ENCODE measurements at regions of chr4 and their contacts with region 1.

Region 1: DNA sequence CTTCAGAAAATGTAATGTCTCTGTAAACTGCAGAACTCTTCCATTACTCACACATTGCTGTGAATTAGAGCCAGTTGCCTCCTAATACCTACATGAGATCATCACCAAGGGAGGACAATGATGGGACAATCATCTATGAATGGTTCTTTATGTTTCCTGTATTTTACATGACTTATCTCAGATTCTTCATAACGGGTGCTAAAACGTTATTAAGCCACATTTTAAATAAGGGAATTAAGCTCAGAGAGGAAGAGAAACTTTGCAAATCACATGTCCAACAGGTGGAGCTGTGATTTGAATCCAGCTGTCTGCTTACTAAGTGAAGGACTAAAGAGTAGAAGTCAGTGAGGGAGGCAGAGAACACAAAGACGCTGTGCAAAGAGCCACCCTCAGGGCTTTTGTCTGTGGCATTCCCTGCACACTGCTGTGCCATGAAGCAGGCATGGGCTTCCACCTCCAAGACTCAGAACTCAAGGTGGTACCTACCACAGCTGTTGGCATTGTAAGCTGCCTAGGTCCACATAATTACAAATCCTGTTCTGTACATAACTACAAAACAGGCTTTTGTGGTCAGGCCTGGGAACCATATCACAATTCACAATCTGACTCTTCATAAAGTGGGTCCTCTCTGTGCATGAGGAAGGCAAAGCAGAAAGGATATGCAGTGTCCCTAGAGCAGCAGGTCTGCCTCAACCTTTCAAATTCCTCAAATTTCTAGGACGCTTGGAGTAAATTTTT is 12.8 kb downstream of the TBC1D9 start:
- DNase-seq: peak; percentile 58
- ATAC-seq: peak; percentile 81
- H3K4me3 ChIP-seq: peak overlapping the region; percentile 13; the same call in 1 of the 2 replicates
- H3K27ac ChIP-seq: peak overlapping the region; percentile 83
- H3K4me1 ChIP-seq: peaks cover 25% of the 10 kb centered on the region
- H3K27me3 ChIP-seq: no peaks in the 10 kb centered on the region
- CTCF ChIP-seq: peak in 2 of 3 experiments; percentile 34 to 44; a peak in 3 of 6 replicates
- EP300 ChIP-seq: peak in 1 of 2 experiments; percentile 73; a peak in 2 of 4 replicates
- POLR2A ChIP-seq: no peak
- RAD21 ChIP-seq: peak; percentile 52

Region 2: GRCh38 chr4:140078366-140078765 is 665.0 kb before region 1 on chr4:
- CTCF ChIA-PET with region 1: no interaction called
- POLR2A ChIA-PET with region 1: no interaction called
- RAD21 ChIA-PET with region 1: no interaction called
- SMC1A ChIA-PET with region 1: no interaction called
- in situ Hi-C with region 1: no loop called
- intact Hi-C with region 1: no loop called
- DNase-seq: no peak
- ATAC-seq: no peak
- H3K4me3 ChIP-seq: no peak overlapping the region
- H3K27ac ChIP-seq: no peak overlapping the region
- H3K4me1 ChIP-seq: no peaks in the 10 kb centered on the region
- H3K27me3 ChIP-seq: peaks cover 0 to 2% of the 10 kb centered on the region in 2 experiments; a peak in 2 of 4 replicates
- CTCF ChIP-seq: no peak
- EP300 ChIP-seq: no peak
- POLR2A ChIP-seq: no peak
- RAD21 ChIP-seq: no peak

Region 3: DNA sequence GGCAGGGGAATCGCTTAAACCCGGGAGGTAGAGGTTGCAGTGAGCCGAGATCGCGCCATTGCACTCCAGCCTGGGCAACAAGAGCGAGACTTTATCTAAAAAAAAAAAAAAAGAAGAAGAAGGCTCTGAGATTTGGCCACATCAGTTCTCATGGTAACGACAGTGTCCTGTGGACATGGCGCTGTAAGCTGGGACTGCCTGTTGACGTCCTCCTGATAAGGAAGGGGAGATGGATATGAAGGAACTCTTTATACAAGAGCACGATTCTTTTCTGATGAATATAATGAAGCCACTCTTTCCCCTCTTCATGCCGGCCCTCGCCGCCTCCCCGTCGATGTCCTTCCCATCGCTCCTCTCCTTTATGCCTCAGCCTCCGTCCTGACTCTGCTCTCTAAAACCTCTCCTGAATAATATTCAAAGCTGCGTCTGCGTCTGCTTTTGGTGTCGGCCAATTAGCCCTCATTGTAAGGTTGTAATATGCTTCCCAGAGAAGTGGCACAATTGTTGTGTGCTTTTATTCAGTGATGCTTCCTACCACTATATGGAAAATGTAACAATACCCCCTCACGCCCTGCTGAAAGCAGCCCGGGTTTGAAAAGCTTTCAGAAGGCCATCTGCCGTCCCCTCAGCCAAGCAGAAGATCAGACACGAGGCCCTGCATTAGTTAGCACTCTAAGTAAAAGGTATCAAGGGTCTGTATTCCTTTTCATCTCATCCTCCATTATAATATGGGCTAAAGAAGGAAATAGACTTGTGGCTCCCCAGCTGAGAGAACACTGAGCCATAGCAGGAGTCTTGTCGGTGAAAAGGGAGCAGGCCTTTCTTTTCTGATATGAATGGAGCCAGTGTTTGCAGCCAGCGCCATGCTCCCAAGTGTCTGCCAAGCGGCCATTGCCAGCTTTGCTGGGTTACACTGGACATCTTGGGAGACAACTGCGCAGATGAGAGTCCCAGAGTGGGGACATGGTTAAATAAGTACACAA is 392.0 kb before region 1 on chr4:
- CTCF ChIA-PET with region 1: no interaction called
- POLR2A ChIA-PET with region 1: no interaction called
- RAD21 ChIA-PET with region 1: no interaction called
- SMC1A ChIA-PET with region 1: no interaction called
- in situ Hi-C with region 1: no loop called
- intact Hi-C with region 1: no loop called
- DNase-seq: no peak
- ATAC-seq: no peak
- H3K4me3 ChIP-seq: no peak overlapping the region
- H3K27ac ChIP-seq: no peak overlapping the region
- H3K4me1 ChIP-seq: no peaks in the 10 kb centered on the region
- H3K27me3 ChIP-seq: no peaks in the 10 kb centered on the region
- CTCF ChIP-seq: no peak
- EP300 ChIP-seq: no peak
- POLR2A ChIP-seq: no peak
- RAD21 ChIP-seq: no peak

Region 4: GRCh38 chr4:140568507-140569306 is 174.7 kb before region 1 on chr4 and contains the start of gene UCP1:
- CTCF ChIA-PET with region 1: no interaction called
- POLR2A ChIA-PET with region 1: no interaction called
- RAD21 ChIA-PET with region 1: no interaction called
- SMC1A ChIA-PET with region 1: no interaction called
- in situ Hi-C with region 1: no loop called
- intact Hi-C with region 1: no loop called
- DNase-seq: no peak
- ATAC-seq: no peak
- H3K4me3 ChIP-seq: peak within 1 kb of the TSS; percentile 11; the same call in 1 of the 2 replicates
- H3K27ac ChIP-seq: no peak within 1 kb of the TSS
- H3K4me1 ChIP-seq: peaks cover 6% of the 10 kb centered on the region; the same call in 1 of the 2 replicates
- H3K27me3 ChIP-seq: peaks cover 11 to 40% of the 10 kb centered on the region in 2 experiments
- CTCF ChIP-seq: no peak
- EP300 ChIP-seq: no peak
- POLR2A ChIP-seq: no peak
- RAD21 ChIP-seq: no peak
- polyA plus RNA-seq, gene UCP1: not detected

Region 5: GRCh38 chr4:140829825-140830224 is 86.5 kb after region 1 on chr4:
- CTCF ChIA-PET with region 1: no interaction called
- POLR2A ChIA-PET with region 1: no interaction called
- RAD21 ChIA-PET with region 1: no interaction called
- SMC1A ChIA-PET with region 1: no interaction called
- in situ Hi-C with region 1: loop called (anchors 5 kb)
- intact Hi-C with region 1: no loop called
- DNase-seq: peak; percentile 55
- ATAC-seq: peak; percentile 84
- H3K4me3 ChIP-seq: no peak overlapping the region
- H3K27ac ChIP-seq: peak overlapping the region; percentile 73
- H3K4me1 ChIP-seq: peaks cover 36% of the 10 kb centered on the region
- H3K27me3 ChIP-seq: no peaks in the 10 kb centered on the region
- CTCF ChIP-seq: no peak
- EP300 ChIP-seq: peak in 1 of 2 experiments; percentile 36; a peak in 1 of 4 replicates
- POLR2A ChIP-seq: no peak
- RAD21 ChIP-seq: no peak

Measured in GM12878 (cell line).